Dendritic cell treated with granulocyte-macrophage colony-stimulating factor and Interleukin-4, amounts not matched to agents 40 ng/mL and 50 ng/mL, for 4 days (primary cell): ENCODE measurements at regions of chr6 and their contacts with region 1.

Region 1: DNA sequence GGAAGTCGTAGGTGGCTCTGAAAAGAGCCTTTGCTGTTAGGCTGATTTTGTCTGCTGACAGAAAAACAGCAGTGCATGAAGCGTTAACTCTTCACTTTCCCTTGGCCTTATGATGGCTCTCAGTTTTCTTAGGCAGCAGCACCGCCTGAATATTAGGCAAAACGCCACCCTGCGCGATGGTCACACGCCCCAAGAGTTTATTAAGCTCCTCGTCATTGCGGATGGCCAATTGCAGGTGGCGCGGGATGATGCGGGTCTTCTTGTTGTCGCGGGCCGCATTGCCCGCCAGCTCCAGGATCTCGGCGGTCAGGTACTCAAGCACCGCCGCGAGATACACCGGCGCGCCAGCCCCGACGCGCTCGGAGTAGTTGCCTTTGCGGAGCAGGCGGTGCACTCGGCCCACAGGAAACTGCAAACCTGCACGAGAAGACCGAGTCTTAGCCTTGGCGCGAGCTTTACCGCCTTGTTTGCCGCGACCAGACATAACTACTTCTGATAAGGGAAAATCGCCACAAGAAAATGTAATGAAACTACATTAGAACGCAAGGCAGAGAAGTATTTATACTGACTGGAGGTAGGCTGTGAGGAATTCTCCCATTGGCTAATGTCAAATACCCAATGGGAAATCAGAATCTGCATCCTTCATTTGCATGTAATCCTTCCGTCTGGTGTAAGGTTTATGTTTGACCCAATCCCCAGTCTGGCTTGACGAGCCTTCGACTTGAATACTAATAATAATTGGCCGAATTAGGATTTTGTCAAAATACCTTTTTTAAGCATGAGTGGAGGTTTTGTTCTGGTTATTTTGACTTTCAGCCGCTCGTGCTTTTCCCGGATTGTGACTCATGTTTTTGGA is 53.9 kb upstream of the HFE start:
- H3K4me3 Mint-ChIP-seq: peak overlapping the region; percentile 78
- H3K27ac Mint-ChIP-seq: peak overlapping the region; percentile 91
- H3K4me1 Mint-ChIP-seq: peaks cover 33% of the 10 kb centered on the region
- H3K27me3 Mint-ChIP-seq: no peaks in the 10 kb centered on the region

Region 2: DNA sequence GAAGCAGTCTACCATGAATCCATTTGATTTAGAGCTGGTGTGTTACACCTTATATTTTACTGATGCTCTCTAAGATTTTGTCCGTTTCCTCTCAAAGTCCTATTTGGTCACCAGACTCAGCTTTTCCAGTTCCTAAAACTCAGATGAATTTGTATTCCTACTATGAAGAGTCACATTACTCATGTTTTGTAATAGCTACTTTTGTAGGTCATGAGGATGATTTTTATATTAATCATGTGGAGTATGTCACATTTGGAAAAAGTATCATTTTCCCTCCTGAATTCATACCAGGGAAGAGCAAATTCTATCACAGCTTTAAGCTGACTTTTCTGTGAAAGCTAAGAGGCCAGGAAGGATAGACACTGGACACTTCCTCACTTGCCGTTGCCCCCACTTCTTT is 521.9 kb before region 1 on chr6:
- intact Hi-C with region 1: no loop called
- H3K4me3 Mint-ChIP-seq: no peak overlapping the region
- H3K27ac Mint-ChIP-seq: no peak overlapping the region
- H3K4me1 Mint-ChIP-seq: no peaks in the 10 kb centered on the region
- H3K27me3 Mint-ChIP-seq: no peaks in the 10 kb centered on the region

Region 3: DNA sequence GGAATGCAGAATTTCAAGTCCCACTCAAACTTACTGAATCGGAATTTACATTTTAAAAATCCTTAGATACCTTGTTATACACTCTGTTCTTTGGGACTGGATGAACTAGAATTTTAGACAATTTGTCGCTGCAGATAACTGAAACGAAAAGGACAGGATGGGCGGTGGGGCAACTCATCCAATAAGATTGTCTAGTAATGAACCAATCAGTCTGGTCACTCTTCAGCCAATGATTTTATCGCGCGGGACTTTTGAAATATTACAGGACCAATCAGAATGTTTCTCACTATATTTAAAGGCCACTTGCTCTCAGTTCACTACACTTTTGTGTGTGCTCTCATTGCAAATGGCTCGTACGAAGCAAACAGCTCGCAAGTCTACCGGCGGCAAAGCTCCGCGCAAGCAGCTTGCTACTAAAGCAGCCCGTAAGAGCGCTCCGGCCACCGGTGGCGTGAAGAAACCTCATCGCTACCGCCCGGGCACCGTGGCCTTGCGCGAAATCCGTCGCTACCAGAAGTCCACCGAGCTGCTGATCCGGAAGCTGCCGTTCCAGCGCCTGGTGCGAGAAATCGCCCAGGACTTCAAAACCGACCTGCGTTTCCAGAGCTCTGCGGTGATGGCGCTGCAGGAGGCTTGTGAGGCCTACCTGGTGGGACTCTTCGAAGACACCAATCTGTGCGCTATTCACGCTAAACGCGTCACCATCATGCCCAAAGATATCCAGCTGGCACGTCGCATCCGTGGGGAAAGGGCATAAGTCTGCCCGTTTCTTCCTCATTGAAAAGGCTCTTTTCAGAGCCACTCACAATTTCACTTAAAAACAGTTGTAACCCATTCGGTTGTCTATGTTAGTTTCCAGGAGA is 12.0 kb after region 1 on chr6:
- intact Hi-C with region 1: loop called (anchors 1 kb)
- H3K4me3 Mint-ChIP-seq: peak overlapping the region; percentile 76
- H3K27ac Mint-ChIP-seq: peak overlapping the region; percentile 87
- H3K4me1 Mint-ChIP-seq: peaks cover 24% of the 10 kb centered on the region
- H3K27me3 Mint-ChIP-seq: no peaks in the 10 kb centered on the region